A549 (cell line): ENCODE measurements at regions of chr11 and their contacts with region 1.

Region 1: DNA sequence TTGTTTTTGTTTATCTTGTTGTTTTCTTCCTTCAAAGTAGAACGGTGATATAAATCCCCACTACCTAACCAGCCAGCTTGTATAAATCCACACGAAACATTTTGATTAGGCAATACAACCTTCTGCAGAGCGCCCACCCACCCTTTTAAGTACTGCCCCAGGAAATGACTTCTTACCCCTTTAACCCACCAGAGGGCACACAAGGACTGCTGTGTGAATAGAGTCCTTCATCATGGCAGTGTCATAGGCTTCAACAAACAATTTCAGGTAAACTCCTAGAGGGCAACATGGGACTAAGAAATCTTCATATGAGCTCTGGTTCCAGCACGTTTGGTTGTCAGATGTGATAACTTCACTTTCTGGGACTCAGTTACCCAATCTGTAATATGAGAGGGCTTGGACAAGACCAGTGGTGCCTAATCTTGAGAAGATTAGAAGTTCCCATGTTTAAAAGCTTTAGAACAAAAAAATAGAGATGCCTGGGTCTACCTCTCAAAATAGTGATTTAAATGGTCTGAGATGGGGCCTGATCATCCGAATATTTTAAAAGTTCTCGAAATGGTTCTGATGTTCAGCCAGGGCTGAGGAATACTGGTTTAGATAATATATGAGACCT is 56.1 kb downstream of the PIWIL4 start:
- DNase-seq: peak; percentile 60 to 82
- ATAC-seq: peak; percentile 88 to 96
- H3K4me3 ChIP-seq: no peak overlapping the region
- H3K27ac ChIP-seq: no peak overlapping the region
- H3K4me1 ChIP-seq: no peaks in the 10 kb centered on the region
- CTCF ChIP-seq: peak; percentile 91
- EP300 ChIP-seq: no peak
- POLR2A ChIP-seq: no peak
- RAD21 ChIP-seq: peak; percentile 94 to 97

Region 2: DNA sequence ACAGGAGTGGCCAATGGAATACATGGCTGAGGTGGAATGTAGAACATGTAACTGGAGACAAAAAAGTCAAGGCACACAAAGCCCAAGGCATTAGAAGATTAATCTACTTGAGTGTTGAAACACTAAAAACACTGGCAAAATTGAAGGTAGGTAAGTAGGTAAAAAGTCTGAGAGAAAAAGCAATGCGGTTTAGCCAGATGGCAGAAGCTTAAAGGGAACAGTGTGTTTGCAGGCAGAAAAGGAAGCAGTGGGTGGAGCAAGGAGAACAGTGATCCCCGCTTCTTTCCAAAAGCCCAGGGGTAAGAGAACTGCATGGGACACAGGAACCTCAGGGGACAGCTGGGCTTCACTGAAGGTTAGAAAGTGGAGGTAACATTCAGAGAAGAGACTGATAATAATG is 145.6 kb before region 1 on chr11:
- CTCF ChIA-PET with region 1: no interaction called
- POLR2A ChIA-PET with region 1: no interaction called
- DNase-seq: no peak
- ATAC-seq: no peak
- H3K4me3 ChIP-seq: no peak overlapping the region
- H3K27ac ChIP-seq: no peak overlapping the region
- H3K4me1 ChIP-seq: no peaks in the 10 kb centered on the region
- CTCF ChIP-seq: no peak
- EP300 ChIP-seq: no peak
- POLR2A ChIP-seq: no peak
- RAD21 ChIP-seq: no peak

Region 3: DNA sequence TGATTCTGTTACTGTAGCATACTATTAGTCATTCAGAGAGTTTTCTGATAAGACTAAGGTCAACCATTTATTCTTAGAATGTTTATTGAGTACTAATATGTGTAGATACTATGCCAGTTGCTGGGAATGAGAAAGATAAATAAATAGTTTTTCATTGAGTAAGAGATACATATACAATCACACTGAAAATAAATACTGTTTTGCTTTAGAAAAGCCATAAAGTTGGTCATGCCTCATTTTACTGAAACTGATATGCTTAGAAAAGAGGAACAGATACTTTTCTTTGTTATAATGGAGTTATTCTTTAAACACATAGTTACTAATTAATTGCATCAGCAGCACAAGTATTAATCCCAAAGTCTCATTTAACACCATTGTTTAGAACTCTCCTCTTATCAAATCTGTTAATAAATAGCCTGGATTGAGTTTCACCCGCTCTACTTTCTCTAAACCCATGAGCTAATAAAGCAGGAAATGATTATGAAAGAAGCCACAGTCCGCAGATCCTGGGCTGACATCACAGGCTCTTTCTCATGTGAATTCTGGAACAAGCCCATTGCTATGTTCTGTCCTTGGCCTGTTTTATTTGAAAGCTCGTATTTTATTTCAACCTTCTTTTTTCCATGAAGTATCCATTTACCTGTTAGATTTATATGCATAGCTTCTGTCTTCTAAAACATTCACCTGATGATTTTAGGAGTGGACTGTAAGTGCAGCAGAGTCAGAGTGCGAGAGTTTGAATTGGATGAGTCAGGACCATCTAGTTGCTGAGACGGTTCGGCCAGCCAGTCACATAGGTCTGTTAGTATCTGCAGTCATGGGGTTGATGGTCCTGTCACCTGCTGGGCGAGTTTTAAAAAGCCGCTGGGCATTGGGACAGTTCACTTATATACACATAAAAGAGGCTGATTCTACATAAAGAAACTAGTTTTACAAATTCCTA is 20.5 kb before region 1 on chr11:
- CTCF ChIA-PET with region 1: interaction called, 16 read pairs
- POLR2A ChIA-PET with region 1: no interaction called
- DNase-seq: peak; percentile 28 to 41
- ATAC-seq: peak; percentile 85 to 98
- H3K4me3 ChIP-seq: 0 out of 3 replicates have a peak overlapping the region, but pooled peaks have one; percentile 5
- H3K27ac ChIP-seq: peak overlapping the region; percentile 50 to 62
- H3K4me1 ChIP-seq: peaks cover 29% of the 10 kb centered on the region
- CTCF ChIP-seq: no peak
- EP300 ChIP-seq: no peak
- POLR2A ChIP-seq: no peak
- RAD21 ChIP-seq: no peak

Region 4: DNA sequence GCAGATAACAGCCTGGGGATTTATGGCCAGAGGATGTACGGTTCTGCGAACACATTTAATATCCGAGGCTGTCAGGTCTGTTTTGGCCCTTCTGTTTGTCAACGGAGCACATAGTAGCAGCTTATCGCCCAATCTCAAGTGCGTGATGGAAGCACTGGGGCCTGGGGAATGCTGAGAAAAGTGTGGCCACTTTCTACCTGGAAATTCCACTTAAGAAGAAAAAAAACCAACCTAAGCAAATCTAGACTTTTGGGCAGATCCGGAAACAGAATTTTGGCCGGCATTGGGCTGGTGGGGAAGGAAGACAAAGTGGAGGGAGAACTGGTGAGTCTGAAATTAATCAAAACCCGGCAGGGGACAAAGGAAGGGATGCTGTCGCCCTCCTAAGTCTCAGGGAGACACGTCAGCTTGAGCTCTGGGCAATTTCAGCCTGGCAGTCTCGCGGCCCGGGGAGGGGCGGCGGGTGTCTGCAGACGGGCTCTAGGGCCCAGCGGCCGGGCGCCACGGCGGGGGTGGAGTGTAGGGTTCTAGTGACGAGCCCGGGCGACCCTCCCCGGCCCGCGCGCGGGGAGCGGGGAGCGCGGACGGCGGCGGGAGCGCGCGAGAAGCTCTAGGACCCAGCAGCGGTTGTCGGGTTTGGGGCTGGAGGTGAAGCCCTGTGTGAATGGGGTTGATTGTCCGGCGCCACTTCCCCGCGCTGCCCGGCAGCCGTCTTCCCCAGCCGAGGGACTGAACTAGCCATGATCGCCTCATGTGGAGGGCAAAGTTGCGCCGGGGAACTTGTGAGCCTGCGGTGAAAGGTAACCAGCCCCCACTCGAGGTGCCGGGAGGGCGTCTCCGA is 144.8 kb after region 1 on chr11 and contains the start of gene AMOTL1:
- CTCF ChIA-PET with region 1: interaction called, 15 read pairs
- POLR2A ChIA-PET with region 1: no interaction called
- DNase-seq: peak in 1 of 2 experiments; percentile 74
- ATAC-seq: peak; percentile 88 to 92
- H3K4me3 ChIP-seq: peak within 1 kb of the TSS; percentile 73
- H3K27ac ChIP-seq: peak within 1 kb of the TSS; percentile 78 to 93
- H3K4me1 ChIP-seq: peaks cover 20% of the 10 kb centered on the region; the same call in 2 of the 3 replicates
- CTCF ChIP-seq: no peak
- EP300 ChIP-seq: no peak
- POLR2A ChIP-seq: peak; percentile 44
- RAD21 ChIP-seq: peak; percentile 21 to 36; a peak in 2 of 5 replicates
- polyA plus RNA-seq, gene AMOTL1: 12.2 TPM in 2 replicates

Region 5: GRCh38 chr11:94897330-94897768 is 274.1 kb after region 1 on chr11:
- CTCF ChIA-PET with region 1: interaction called, 59 read pairs
- POLR2A ChIA-PET with region 1: no interaction called
- DNase-seq: peak; percentile 10 to 42
- ATAC-seq: peak in 1 of 2 experiments; percentile 65; a peak in 3 of 6 replicates
- H3K4me3 ChIP-seq: no peak overlapping the region
- H3K27ac ChIP-seq: no peak overlapping the region
- H3K4me1 ChIP-seq: no peaks in the 10 kb centered on the region
- CTCF ChIP-seq: peak; percentile 75
- EP300 ChIP-seq: no peak
- POLR2A ChIP-seq: no peak
- RAD21 ChIP-seq: peak; percentile 80

Region 6: GRCh38 chr11:94973099-94973968 is 350.1 kb after region 1 on chr11 and contains the starts of genes CWC15 and KDM4D:
- CTCF ChIA-PET with region 1: interaction called, 13 read pairs
- POLR2A ChIA-PET with region 1: no interaction called
- DNase-seq: peak; percentile 87 to 89
- ATAC-seq: peak; percentile 100
- H3K4me3 ChIP-seq: peak within 1 kb of the TSS; percentile 66
- H3K27ac ChIP-seq: peak within 1 kb of the TSS; percentile 78 to 95
- H3K4me1 ChIP-seq: peaks cover 6% of the 10 kb centered on the region; the same call in 2 of the 3 replicates
- CTCF ChIP-seq: no peak
- EP300 ChIP-seq: no peak
- POLR2A ChIP-seq: peak; percentile 49
- RAD21 ChIP-seq: no peak
- polyA plus RNA-seq, gene CWC15: 31.8 and 42.8 TPM in 2 replicates
- polyA plus RNA-seq, gene KDM4D: 0.77 and 1.1 TPM in 2 replicates